ENCODE measurements at regions of chr6 and their contacts with region 1.

Region 1: DNA sequence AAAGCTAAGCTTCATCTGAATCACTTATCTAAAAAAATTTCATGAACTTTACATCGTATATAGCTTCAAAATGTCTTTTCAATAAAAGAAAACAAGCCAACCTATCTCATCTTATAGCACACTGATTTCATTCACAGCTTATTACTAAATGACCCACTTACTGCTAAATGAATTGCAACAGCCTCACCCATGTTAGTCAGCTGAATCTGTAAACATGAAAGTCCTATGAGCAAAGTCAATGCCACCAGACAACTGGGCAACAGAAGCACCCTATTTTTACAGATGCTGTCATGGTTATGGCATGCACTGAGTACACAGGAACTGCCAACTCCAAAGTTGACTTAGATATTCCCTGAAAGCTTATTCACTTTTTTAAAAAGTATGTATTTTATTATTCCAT is 41.2 kb upstream of the DST start:
- DNase-seq: peak; percentile 80
- H3K4me3 Mint-ChIP-seq: peak overlapping the region; percentile 20
- H3K27ac Mint-ChIP-seq: peak overlapping the region; percentile 87
- H3K4me1 Mint-ChIP-seq: peaks cover 16% of the 10 kb centered on the region
- H3K27me3 Mint-ChIP-seq: no peaks in the 10 kb centered on the region
- CTCF ChIP-seq: no peak

Region 2: DNA sequence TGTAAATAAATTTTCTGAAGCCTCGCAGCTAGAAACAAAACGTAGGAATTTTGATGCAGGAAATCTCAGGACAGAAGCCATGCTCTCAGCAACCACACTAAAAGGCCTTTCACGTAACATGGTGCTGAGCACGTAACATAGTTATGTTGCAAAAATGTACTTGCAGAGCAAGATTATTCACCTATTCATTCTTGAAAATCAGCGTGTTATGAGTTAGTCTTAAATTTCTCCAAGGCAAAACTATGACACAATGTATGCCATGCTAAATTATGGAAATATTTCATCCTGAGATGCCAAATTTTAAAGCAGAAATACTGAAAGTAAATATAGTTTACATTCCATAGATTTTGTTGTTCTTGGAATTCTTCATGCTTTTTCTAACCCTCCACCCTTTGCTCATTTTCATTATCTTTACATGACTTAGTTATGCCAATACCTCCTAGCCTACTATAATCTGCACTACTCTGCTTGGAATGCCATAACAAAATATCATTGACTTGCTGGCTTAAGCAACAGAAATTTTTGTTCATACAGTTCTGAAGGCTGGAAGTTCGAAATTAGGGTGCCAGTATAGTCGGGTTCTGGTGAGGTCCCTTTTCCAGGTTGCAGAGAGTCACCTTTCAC is 628.7 kb before region 1 on chr6:
- CTCF ChIA-PET with region 1: no interaction called
- POLR2A ChIA-PET with region 1: no interaction called
- intact Hi-C with region 1: no loop called
- DNase-seq: no peak
- H3K4me3 Mint-ChIP-seq: no peak overlapping the region
- H3K27ac Mint-ChIP-seq: no peak overlapping the region
- H3K4me1 Mint-ChIP-seq: peaks cover 5% of the 10 kb centered on the region
- H3K27me3 Mint-ChIP-seq: no peaks in the 10 kb centered on the region
- CTCF ChIP-seq: no peak

Region 3: DNA sequence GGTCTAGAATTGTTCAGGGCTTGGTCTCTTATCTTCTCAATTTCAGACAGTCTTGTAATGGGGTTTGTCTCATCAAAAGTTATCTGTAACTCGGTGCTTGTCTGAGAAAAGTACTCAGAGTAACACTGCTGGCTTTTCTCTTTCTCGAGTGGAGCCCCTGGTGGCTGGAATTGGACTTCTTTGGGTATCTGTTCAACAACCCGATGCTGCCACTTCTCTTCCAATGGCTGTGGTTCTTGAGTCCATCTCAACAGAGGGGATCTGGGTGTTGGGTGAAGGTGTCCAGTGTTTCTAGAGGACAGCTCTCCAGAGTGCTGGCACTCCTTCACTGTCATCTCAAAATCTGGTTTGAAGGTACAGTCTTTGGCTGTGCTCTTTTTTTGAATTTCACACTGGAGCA is 65.8 kb before region 1 on chr6:
- CTCF ChIA-PET with region 1: no interaction called
- POLR2A ChIA-PET with region 1: interaction called, 11 read pairs
- intact Hi-C with region 1: no loop called
- DNase-seq: no peak
- H3K4me3 Mint-ChIP-seq: no peak overlapping the region
- H3K27ac Mint-ChIP-seq: no peak overlapping the region
- H3K4me1 Mint-ChIP-seq: no peaks in the 10 kb centered on the region
- H3K27me3 Mint-ChIP-seq: no peaks in the 10 kb centered on the region
- CTCF ChIP-seq: peak; percentile 14

Region 4: GRCh38 chr6:56652994-56653393 is 30.9 kb before region 1 on chr6:
- CTCF ChIA-PET with region 1: no interaction called
- POLR2A ChIA-PET with region 1: interaction called, 395 read pairs
- intact Hi-C with region 1: no loop called
- DNase-seq: peak; percentile 81
- H3K4me3 Mint-ChIP-seq: peak overlapping the region; percentile 66
- H3K27ac Mint-ChIP-seq: peak overlapping the region; percentile 99
- H3K4me1 Mint-ChIP-seq: peaks cover 57% of the 10 kb centered on the region
- H3K27me3 Mint-ChIP-seq: no peaks in the 10 kb centered on the region
- CTCF ChIP-seq: no peak

Region 5: GRCh38 chr6:56671651-56672461 is 12.0 kb before region 1 on chr6:
- CTCF ChIA-PET with region 1: interaction called, 28 read pairs
- POLR2A ChIA-PET with region 1: interaction called, 395 read pairs
- intact Hi-C with region 1: no loop called
- DNase-seq: no peak
- H3K4me3 Mint-ChIP-seq: no peak overlapping the region
- H3K27ac Mint-ChIP-seq: peak overlapping the region; percentile 73
- H3K4me1 Mint-ChIP-seq: peaks cover 17% of the 10 kb centered on the region
- H3K27me3 Mint-ChIP-seq: no peaks in the 10 kb centered on the region
- CTCF ChIP-seq: no peak

Measured in MCF 10A (cell line).